MCF 10A (cell line): ENCODE measurements at regions of chr3 and their contacts with region 1.

Region 1: DNA sequence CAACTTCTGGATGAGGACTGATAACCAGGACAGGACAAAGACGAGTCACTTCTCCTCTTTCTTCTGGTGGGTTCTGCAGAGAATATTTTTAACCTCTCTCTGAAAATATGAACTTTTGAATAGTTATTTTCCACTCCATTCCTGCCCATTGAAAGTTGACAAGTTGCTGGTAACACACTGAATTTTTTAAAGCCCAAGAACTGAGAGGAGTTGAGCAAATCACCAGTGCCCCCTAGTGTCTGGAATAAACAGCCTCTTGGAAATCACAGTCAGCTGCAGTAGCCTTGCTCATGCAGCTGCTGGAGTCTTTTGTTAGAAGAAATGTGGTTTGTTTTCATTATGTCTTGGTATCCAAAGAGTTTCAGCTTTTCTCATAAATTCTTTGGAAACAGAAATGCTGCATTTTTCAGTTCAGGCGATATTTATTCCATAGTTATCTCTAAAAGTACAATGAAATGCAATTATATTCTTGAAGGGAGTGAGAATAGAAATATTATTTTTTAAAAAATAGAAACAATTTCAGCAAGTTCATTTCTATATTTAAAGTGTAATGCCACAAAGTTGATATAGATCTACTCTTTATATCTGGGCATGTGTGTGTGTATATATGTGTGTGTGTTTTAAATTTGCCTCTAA is 741.0 kb upstream of the CBLB start:
- DNase-seq: peak; percentile 85
- H3K4me3 Mint-ChIP-seq: no peak overlapping the region
- H3K27ac Mint-ChIP-seq: peak overlapping the region; percentile 65
- H3K4me1 Mint-ChIP-seq: peaks cover 22% of the 10 kb centered on the region
- H3K27me3 Mint-ChIP-seq: no peaks in the 10 kb centered on the region
- CTCF ChIP-seq: peak; percentile 86

Region 2: GRCh38 chr3:105538483-105538882 is 1071.3 kb before region 1 on chr3:
- CTCF ChIA-PET with region 1: no interaction called
- POLR2A ChIA-PET with region 1: no interaction called
- intact Hi-C with region 1: loop called (anchors 10 kb)
- DNase-seq: no peak
- H3K4me3 Mint-ChIP-seq: no peak overlapping the region
- H3K27ac Mint-ChIP-seq: peak overlapping the region; percentile 11
- H3K4me1 Mint-ChIP-seq: peaks cover 8% of the 10 kb centered on the region
- H3K27me3 Mint-ChIP-seq: no peaks in the 10 kb centered on the region
- CTCF ChIP-seq: no peak

Region 3: GRCh38 chr3:106206146-106206545 is 403.6 kb before region 1 on chr3:
- CTCF ChIA-PET with region 1: interaction called, 3 read pairs
- POLR2A ChIA-PET with region 1: interaction called, 3 read pairs
- intact Hi-C with region 1: loop called (anchors 2 kb)
- DNase-seq: no peak
- H3K4me3 Mint-ChIP-seq: no peak overlapping the region
- H3K27ac Mint-ChIP-seq: no peak overlapping the region
- H3K4me1 Mint-ChIP-seq: no peaks in the 10 kb centered on the region
- H3K27me3 Mint-ChIP-seq: no peaks in the 10 kb centered on the region
- CTCF ChIP-seq: no peak

Region 4: GRCh38 chr3:106585871-106586270 is 23.9 kb before region 1 on chr3:
- CTCF ChIA-PET with region 1: interaction called, 11 read pairs
- POLR2A ChIA-PET with region 1: interaction called, 3 read pairs
- intact Hi-C with region 1: no loop called
- DNase-seq: no peak
- H3K4me3 Mint-ChIP-seq: no peak overlapping the region
- H3K27ac Mint-ChIP-seq: no peak overlapping the region
- H3K4me1 Mint-ChIP-seq: peaks cover 21% of the 10 kb centered on the region
- H3K27me3 Mint-ChIP-seq: no peaks in the 10 kb centered on the region
- CTCF ChIP-seq: no peak

Region 5: DNA sequence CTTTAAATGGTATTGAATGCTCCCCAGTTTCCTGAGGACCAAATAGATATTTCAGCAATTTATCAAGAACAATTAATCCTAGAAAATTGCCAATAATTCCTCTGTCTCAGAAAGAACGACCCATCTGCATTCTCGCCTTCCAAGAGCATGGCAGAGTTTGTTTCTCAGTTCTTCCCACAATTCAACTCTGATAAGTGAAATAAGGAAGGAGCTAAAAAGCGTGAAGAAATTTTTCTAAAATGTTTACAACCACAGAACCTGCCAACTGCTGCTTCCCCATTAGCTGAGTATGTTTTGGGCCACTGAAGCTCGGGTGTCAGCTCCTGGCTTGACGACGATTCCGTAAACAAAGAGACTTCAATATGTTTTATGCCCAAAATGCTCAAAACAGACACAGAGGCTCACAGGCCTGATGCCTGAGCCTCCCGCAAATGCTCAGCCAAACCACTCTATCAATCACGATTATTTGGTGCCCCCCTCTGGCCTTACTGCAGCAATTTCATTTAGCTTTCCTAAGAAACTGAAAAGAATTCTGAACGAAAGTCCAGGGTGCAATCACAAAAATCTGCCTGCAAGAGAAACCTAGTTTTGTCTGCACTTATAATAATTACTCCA is 508.2 kb after region 1 on chr3:
- CTCF ChIA-PET with region 1: no interaction called
- POLR2A ChIA-PET with region 1: no interaction called
- intact Hi-C with region 1: loop called (anchors 5 kb)
- DNase-seq: peak; percentile 65
- H3K4me3 Mint-ChIP-seq: no peak overlapping the region
- H3K27ac Mint-ChIP-seq: peak overlapping the region; percentile 12
- H3K4me1 Mint-ChIP-seq: no peaks in the 10 kb centered on the region
- H3K27me3 Mint-ChIP-seq: no peaks in the 10 kb centered on the region
- CTCF ChIP-seq: peak; percentile 55